Vagina (tissue), 2 donors: ENCODE measurements at regions of chr15 and their contacts with region 1.

Region 1: GRCh38 chr15:73972984-73973682 is 19.0 kb downstream of the STOML1 start:
- DNase-seq: no peak
- H3K4me3 ChIP-seq: peak overlapping the region; percentile 16 to 25
- H3K27ac ChIP-seq: no peak overlapping the region
- H3K4me1 ChIP-seq: peaks cover 11% of the 10 kb centered on the region
- H3K27me3 ChIP-seq: no peaks in the 10 kb centered on the region
- CTCF ChIP-seq: peak; percentile 78 to 95 (median 89)
- POLR2A ChIP-seq: no peak

Region 2: DNA sequence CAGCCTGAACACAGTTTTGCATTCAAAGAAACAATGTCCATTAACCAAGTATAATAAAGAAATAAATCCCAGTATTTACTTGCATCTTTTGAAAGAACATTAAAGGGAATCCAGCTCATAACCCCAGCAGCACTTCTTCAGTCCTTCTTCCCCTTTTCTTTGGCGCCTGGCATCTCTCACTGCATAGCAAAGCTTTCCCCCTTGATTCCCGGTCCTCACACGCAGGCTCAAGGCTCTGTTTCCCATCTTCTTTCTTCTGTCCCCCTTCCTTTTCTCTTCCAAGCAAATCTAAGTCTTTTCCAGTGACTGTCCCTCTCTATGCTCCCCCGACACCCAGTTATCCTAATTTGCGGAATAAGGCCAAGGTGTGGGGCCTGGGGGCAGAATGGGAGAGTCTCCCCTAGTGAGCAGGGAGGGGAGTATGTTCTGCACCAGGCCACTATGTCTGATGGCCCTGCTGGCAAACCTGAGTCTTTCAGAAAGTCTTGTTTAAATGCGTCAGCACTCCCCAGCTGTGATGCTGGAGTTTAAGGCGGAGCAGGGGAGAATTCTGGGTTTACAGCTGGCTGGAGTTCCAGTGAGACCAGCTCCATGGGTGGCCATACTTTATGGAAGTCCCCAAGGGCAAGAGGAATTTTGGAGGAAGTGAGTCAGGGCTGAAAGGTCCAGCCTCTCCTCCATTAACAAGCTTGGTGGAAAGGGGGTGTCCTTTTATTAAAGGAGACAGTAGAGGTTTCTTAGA is 67.1 kb after region 1 on chr15:
- intact Hi-C with region 1: loop called (anchors 5 kb)
- DNase-seq: peak in 1 of 2 donors; percentile 95
- H3K4me3 ChIP-seq: no peak overlapping the region
- H3K27ac ChIP-seq: peak overlapping the region; percentile 49
- H3K4me1 ChIP-seq: peaks cover 26% of the 10 kb centered on the region
- H3K27me3 ChIP-seq: no peaks in the 10 kb centered on the region
- CTCF ChIP-seq: no peak
- POLR2A ChIP-seq: no peak

Region 3: DNA sequence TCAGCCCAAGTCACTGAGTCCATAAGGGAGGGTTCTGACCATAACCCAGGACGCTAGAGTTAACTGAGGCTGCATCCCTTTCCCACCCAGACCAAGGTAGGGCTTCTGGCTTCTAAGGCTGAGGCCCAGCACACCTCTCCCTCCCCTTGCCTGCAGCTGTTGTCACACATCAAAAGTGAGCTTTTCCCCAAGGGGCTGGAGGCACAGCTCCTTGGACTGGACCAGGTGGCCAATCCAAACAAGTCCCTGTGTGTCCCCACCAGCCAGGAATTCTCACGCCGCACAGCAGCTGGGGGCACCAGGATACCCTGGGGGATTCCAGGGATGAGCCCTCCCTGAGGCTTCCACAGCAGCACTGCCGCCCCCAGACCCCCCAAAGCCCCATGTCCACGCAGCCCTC is 135.0 kb after region 1 on chr15:
- intact Hi-C with region 1: no loop called
- DNase-seq: no peak
- H3K4me3 ChIP-seq: no peak overlapping the region
- H3K27ac ChIP-seq: no peak overlapping the region
- H3K4me1 ChIP-seq: no peaks in the 10 kb centered on the region
- H3K27me3 ChIP-seq: no peaks in the 10 kb centered on the region
- CTCF ChIP-seq: no peak
- POLR2A ChIP-seq: no peak

Region 4: DNA sequence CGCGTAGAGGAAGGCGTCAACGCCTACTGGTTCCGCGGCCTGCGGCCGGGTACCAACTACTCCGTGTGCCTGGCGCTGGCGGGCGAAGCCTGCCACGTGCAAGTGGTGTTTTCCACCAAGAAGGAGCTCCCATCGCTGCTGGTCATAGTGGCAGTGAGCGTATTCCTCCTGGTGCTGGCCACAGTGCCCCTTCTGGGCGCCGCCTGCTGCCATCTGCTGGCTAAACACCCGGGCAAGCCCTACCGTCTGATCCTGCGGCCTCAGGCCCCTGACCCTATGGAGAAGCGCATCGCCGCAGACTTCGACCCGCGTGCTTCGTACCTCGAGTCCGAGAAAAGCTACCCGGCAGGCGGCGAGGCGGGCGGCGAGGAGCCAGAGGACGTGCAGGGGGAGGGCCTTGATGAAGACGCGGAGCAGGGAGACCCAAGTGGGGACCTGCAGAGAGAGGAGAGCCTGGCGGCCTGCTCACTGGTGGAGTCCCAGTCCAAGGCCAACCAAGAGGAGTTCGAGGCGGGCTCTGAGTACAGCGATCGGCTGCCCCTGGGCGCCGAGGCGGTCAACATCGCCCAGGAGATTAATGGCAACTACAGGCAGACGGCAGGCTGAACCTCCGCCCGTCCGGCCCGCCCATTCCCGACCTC is 161.4 kb after region 1 on chr15:
- intact Hi-C with region 1: loop called (anchors 10 kb)
- DNase-seq: peak in 1 of 2 donors; percentile 75
- H3K4me3 ChIP-seq: no peak overlapping the region
- H3K27ac ChIP-seq: no peak overlapping the region
- H3K4me1 ChIP-seq: peaks cover 40% of the 10 kb centered on the region
- H3K27me3 ChIP-seq: peaks cover 16% of the 10 kb centered on the region
- CTCF ChIP-seq: no peak
- POLR2A ChIP-seq: no peak